Natural killer cell (primary cell): ENCODE measurements at regions of chr7 and their contacts with region 1.

Region 1: DNA sequence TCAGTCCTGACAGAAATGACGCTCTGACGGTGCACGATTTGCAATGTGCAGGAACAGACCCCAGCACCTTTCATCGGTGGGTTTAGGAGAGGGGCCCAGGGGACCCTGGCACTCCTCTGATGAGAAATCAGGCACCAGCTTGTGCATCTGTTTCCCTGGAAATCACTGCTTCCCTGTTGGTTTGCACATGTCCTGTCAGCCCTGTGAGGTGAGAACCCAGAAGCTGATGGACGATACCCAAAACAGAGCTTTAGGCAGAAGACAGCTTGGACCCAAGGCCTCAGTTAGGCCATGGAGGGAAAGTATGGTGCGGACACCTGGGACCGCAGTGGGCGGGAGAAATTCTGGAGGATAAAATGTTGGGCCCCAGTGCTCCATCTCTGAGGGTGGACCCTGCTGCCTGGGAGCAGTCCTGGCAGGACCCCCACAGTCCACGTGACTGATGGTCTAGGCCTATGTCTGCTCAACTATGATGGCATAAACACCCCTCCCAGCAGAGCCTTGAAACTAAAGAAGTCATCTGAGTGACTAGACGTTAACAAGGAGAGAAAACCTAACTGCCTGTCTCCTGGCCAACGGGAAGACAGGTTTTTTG is 242.8 kb downstream of the PTPRN2 start:
- DNase-seq: no peak
- ATAC-seq: no peak
- H3K4me3 ChIP-seq: no peak overlapping the region
- H3K4me3 Mint-ChIP-seq: no peak overlapping the region
- H3K27ac ChIP-seq: no peak overlapping the region
- H3K27ac Mint-ChIP-seq: no peak overlapping the region
- H3K4me1 ChIP-seq: no peaks in the 10 kb centered on the region
- H3K4me1 Mint-ChIP-seq: peaks cover 5 to 19% of the 10 kb centered on the region in 2 donors
- H3K27me3 ChIP-seq: no peaks in the 10 kb centered on the region
- H3K27me3 Mint-ChIP-seq: no peaks in the 10 kb centered on the region
- CTCF ChIP-seq: no peak

Region 2: GRCh38 chr7:158043551-158044481 is 301.0 kb before region 1 on chr7:
- intact Hi-C with region 1: no loop called
- DNase-seq: no peak
- ATAC-seq: no peak
- H3K4me3 ChIP-seq: no peak overlapping the region
- H3K4me3 Mint-ChIP-seq: no peak overlapping the region
- H3K27ac ChIP-seq: no peak overlapping the region
- H3K27ac Mint-ChIP-seq: no peak overlapping the region
- H3K4me1 ChIP-seq: no peaks in the 10 kb centered on the region
- H3K4me1 Mint-ChIP-seq: no peaks in the 10 kb centered on the region
- H3K27me3 ChIP-seq: no peaks in the 10 kb centered on the region
- H3K27me3 Mint-ChIP-seq: no peaks in the 10 kb centered on the region
- CTCF ChIP-seq: no peak

Region 3: GRCh38 chr7:158595069-158595468 is 250.3 kb after region 1 on chr7:
- intact Hi-C with region 1: loop called (anchors 10 kb)
- DNase-seq: peak in 1 of 2 donors; percentile 47
- ATAC-seq: peak; percentile 51 to 84 (median 73)
- H3K4me3 ChIP-seq: no peak overlapping the region
- H3K4me3 Mint-ChIP-seq: no peak overlapping the region
- H3K27ac ChIP-seq: no peak overlapping the region
- H3K27ac Mint-ChIP-seq: no peak overlapping the region
- H3K4me1 ChIP-seq: no peaks in the 10 kb centered on the region
- H3K4me1 Mint-ChIP-seq: no peaks in the 10 kb centered on the region
- H3K27me3 ChIP-seq: no peaks in the 10 kb centered on the region
- H3K27me3 Mint-ChIP-seq: peaks cover 0 to 2% of the 10 kb centered on the region in 2 donors
- CTCF ChIP-seq: no peak